ENCODE measurements at regions of chr17 and their contacts with region 1.

Region 1: GRCh38 chr17:61862975-61863800 is at the start of gene BRIP1:
- DNase-seq: peak; percentile 97
- H3K4me3 Mint-ChIP-seq: peak within 1 kb of the TSS; percentile 90
- H3K27ac Mint-ChIP-seq: peak within 1 kb of the TSS; percentile 94
- H3K4me1 Mint-ChIP-seq: peaks cover 27% of the 10 kb centered on the region
- H3K27me3 Mint-ChIP-seq: no peaks in the 10 kb centered on the region
- CTCF ChIP-seq: no peak
- total RNA-seq, gene BRIP1: 3.4 and 4.7 TPM in 2 replicates

Region 2: GRCh38 chr17:62065598-62066468 is 202.6 kb after region 1 on chr17:
- CTCF ChIA-PET with region 1: no interaction called
- POLR2A ChIA-PET with region 1: interaction called, 7 read pairs
- intact Hi-C with region 1: loop called (anchors 2 kb)
- DNase-seq: peak; percentile 98
- H3K4me3 Mint-ChIP-seq: peak overlapping the region; percentile 90
- H3K27ac Mint-ChIP-seq: peak overlapping the region; percentile 95
- H3K4me1 Mint-ChIP-seq: peaks cover 24% of the 10 kb centered on the region
- H3K27me3 Mint-ChIP-seq: no peaks in the 10 kb centered on the region
- CTCF ChIP-seq: peak; percentile 77

Region 3: GRCh38 chr17:62093188-62094155 is 230.3 kb after region 1 on chr17:
- CTCF ChIA-PET with region 1: no interaction called
- POLR2A ChIA-PET with region 1: no interaction called
- intact Hi-C with region 1: loop called (anchors 10 kb)
- DNase-seq: peak; percentile 88
- H3K4me3 Mint-ChIP-seq: no peak overlapping the region
- H3K27ac Mint-ChIP-seq: no peak overlapping the region
- H3K4me1 Mint-ChIP-seq: peaks cover 13% of the 10 kb centered on the region
- H3K27me3 Mint-ChIP-seq: no peaks in the 10 kb centered on the region
- CTCF ChIP-seq: no peak